CD8-positive, alpha-beta T cell (primary cell): ENCODE measurements at regions of chr1 and their contacts with region 1.

Region 1: GRCh38 chr1:206982216-206982615 is 12.0 kb upstream of the FCAMR start:
- DNase-seq: peak; percentile 30 to 78 (median 63)
- ATAC-seq: peak; percentile 83
- H3K4me3 ChIP-seq: no peak overlapping the region
- H3K4me3 Mint-ChIP-seq: no peak overlapping the region
- H3K27ac ChIP-seq: no peak overlapping the region
- H3K27ac Mint-ChIP-seq: no peak overlapping the region
- H3K4me1 ChIP-seq: no peaks in the 10 kb centered on the region
- H3K4me1 Mint-ChIP-seq: no peaks in the 10 kb centered on the region
- H3K27me3 ChIP-seq: no peaks in the 10 kb centered on the region
- H3K27me3 Mint-ChIP-seq: peaks cover 4% of the 10 kb centered on the region
- CTCF ChIP-seq: peak; percentile 83

Region 2: GRCh38 chr1:206479183-206480125 is 502.8 kb before region 1 on chr1:
- CTCF ChIA-PET with region 1: interaction called, 4 read pairs
- POLR2A ChIA-PET with region 1: no interaction called
- intact Hi-C with region 1: loop called in 1 of 2 experiments (anchors 5 kb)
- DNase-seq: peak; percentile 46 to 82 (median 73)
- ATAC-seq: peak; percentile 93
- H3K4me3 ChIP-seq: no peak overlapping the region
- H3K4me3 Mint-ChIP-seq: no peak overlapping the region
- H3K27ac ChIP-seq: no peak overlapping the region
- H3K27ac Mint-ChIP-seq: peak overlapping the region; percentile 80
- H3K4me1 ChIP-seq: peaks cover 13% of the 10 kb centered on the region
- H3K4me1 Mint-ChIP-seq: peaks cover 10% of the 10 kb centered on the region
- H3K27me3 ChIP-seq: no peaks in the 10 kb centered on the region
- H3K27me3 Mint-ChIP-seq: no peaks in the 10 kb centered on the region
- CTCF ChIP-seq: peak; percentile 80

Region 3: GRCh38 chr1:206658264-206658980 is 323.8 kb before region 1 on chr1:
- CTCF ChIA-PET with region 1: interaction called, 28 read pairs
- POLR2A ChIA-PET with region 1: no interaction called
- intact Hi-C with region 1: loop called in 1 of 2 experiments (anchors 2 kb)
- DNase-seq: peak in 8 of 9 experiments; percentile 23 to 67 (median 44)
- ATAC-seq: peak; percentile 89
- H3K4me3 ChIP-seq: no peak overlapping the region
- H3K4me3 Mint-ChIP-seq: no peak overlapping the region
- H3K27ac ChIP-seq: no peak overlapping the region
- H3K27ac Mint-ChIP-seq: no peak overlapping the region
- H3K4me1 ChIP-seq: peaks cover 9% of the 10 kb centered on the region
- H3K4me1 Mint-ChIP-seq: peaks cover 7% of the 10 kb centered on the region
- H3K27me3 ChIP-seq: peaks cover 0 to 7% of the 10 kb centered on the region in 2 experiments
- H3K27me3 Mint-ChIP-seq: peaks cover 36% of the 10 kb centered on the region
- CTCF ChIP-seq: peak; percentile 96

Region 4: GRCh38 chr1:206803221-206803730 is 178.9 kb before region 1 on chr1:
- CTCF ChIA-PET with region 1: interaction called, 63 read pairs
- POLR2A ChIA-PET with region 1: interaction called, 11 read pairs
- intact Hi-C with region 1: loop called in 1 of 2 experiments (anchors 2 kb)
- DNase-seq: peak; percentile 59 to 98 (median 74)
- ATAC-seq: peak; percentile 91
- H3K4me3 ChIP-seq: no peak overlapping the region
- H3K4me3 Mint-ChIP-seq: peak overlapping the region; percentile 40
- H3K27ac ChIP-seq: peak overlapping the region; percentile 51 to 83
- H3K27ac Mint-ChIP-seq: peak overlapping the region; percentile 96
- H3K4me1 ChIP-seq: peaks cover 46% of the 10 kb centered on the region
- H3K4me1 Mint-ChIP-seq: peaks cover 71% of the 10 kb centered on the region
- H3K27me3 ChIP-seq: no peaks in the 10 kb centered on the region
- H3K27me3 Mint-ChIP-seq: no peaks in the 10 kb centered on the region
- CTCF ChIP-seq: no peak

Region 5: DNA sequence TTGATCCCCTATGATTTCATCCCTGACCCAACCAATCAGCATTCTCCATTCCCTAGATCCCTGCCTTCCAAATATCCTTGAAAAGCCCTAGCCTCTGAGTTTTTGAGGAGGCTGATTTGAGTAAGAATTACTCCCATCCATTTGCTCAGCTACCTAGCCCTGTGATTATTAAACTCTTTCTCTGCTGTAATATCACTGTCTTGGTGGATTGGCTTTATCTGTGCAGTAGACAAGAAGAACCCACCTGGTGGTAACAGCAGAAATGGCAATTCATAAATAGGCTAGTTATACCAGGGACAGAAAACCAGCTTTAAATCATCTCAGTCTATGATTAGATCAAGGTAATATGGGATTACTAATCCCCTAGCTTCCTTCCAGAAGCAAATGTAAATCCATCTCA is 103.8 kb before region 1 on chr1:
- CTCF ChIA-PET with region 1: interaction called, 13 read pairs
- POLR2A ChIA-PET with region 1: no interaction called
- intact Hi-C with region 1: no loop called
- DNase-seq: no peak
- ATAC-seq: no peak
- H3K4me3 ChIP-seq: no peak overlapping the region
- H3K4me3 Mint-ChIP-seq: no peak overlapping the region
- H3K27ac ChIP-seq: no peak overlapping the region
- H3K27ac Mint-ChIP-seq: no peak overlapping the region
- H3K4me1 ChIP-seq: no peaks in the 10 kb centered on the region
- H3K4me1 Mint-ChIP-seq: no peaks in the 10 kb centered on the region
- H3K27me3 ChIP-seq: no peaks in the 10 kb centered on the region
- H3K27me3 Mint-ChIP-seq: no peaks in the 10 kb centered on the region
- CTCF ChIP-seq: no peak

Region 6: DNA sequence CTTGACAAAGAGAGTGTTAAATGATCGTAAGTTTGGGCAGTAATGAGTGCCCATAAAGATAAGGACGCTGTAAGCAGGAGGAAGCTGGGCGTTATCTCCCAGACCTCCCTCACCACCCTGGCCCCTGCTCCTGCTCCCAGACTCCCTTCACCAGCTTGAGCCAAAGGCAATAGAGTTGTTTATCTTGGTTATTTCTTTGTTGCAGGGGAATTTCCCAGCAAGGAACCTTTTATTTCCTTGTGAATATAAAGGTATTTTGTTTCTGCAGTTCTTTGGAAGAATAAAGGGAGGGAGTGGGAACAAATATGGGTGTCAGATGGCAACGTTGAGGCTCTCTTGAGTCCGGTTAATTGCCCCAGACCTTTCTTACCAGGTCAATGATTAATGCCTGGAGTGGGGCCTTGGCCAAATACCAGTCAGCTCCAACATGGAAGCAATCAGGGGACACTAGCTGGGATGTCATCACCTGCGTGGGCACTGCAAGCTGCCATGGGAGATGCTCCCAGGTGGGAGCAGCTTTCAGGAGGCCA is 40.3 kb before region 1 on chr1:
- CTCF ChIA-PET with region 1: interaction called, 90 read pairs
- POLR2A ChIA-PET with region 1: no interaction called
- intact Hi-C with region 1: loop called in 1 of 2 experiments (anchors 5 kb)
- DNase-seq: no peak
- ATAC-seq: no peak
- H3K4me3 ChIP-seq: no peak overlapping the region
- H3K4me3 Mint-ChIP-seq: no peak overlapping the region
- H3K27ac ChIP-seq: no peak overlapping the region
- H3K27ac Mint-ChIP-seq: no peak overlapping the region
- H3K4me1 ChIP-seq: no peaks in the 10 kb centered on the region
- H3K4me1 Mint-ChIP-seq: peaks cover 4% of the 10 kb centered on the region
- H3K27me3 ChIP-seq: no peaks in the 10 kb centered on the region
- H3K27me3 Mint-ChIP-seq: peaks cover 4% of the 10 kb centered on the region
- CTCF ChIP-seq: no peak

Region 7: DNA sequence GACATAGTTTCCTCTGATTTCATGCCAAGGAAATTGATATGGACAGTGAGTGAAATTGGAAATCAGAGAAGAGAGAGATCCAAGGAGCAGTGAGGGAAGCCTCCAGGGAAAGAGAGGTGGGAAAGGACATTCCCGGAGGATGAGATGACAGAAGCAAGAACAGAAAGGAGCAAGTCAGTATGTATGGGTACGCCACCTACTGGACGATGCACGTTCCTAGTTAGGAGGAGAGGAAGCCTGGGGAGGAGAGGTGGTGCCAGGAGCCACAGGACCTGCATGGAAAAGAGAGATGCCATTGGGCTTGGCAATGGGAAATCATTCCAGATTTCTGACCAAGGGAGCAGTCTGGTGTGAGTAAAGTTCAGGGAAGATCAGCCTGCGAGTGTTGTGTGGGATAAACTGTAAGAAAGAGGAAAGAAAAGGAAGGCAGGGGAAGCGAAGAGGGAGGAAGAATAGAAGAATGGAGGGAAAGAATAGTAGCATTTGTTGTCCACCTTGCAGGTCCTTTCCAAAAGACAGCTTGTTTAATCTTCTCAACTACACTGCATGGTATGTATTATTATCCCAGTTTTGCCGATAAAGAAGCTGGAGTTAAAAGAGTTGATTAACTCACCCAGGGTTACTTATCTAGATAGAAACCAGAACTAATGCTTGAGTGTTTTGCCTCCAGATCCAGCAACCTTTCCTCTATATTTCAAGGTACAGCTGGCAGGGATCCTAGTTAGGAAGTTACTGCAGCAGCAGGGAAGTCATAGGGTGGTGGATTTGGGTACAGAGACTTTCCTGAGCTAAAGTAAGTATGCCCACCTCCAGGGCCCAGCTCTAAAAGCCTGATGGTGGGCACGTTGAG is 23.0 kb after region 1 on chr1:
- CTCF ChIA-PET with region 1: interaction called, 25 read pairs
- POLR2A ChIA-PET with region 1: no interaction called
- intact Hi-C with region 1: no loop called
- DNase-seq: peak in 7 of 9 experiments; percentile 9 to 58 (median 41)
- ATAC-seq: peak; percentile 51
- H3K4me3 ChIP-seq: no peak overlapping the region
- H3K4me3 Mint-ChIP-seq: no peak overlapping the region
- H3K27ac ChIP-seq: no peak overlapping the region
- H3K27ac Mint-ChIP-seq: no peak overlapping the region
- H3K4me1 ChIP-seq: no peaks in the 10 kb centered on the region
- H3K4me1 Mint-ChIP-seq: peaks cover 2% of the 10 kb centered on the region
- H3K27me3 ChIP-seq: no peaks in the 10 kb centered on the region
- H3K27me3 Mint-ChIP-seq: peaks cover 3% of the 10 kb centered on the region
- CTCF ChIP-seq: peak; percentile 63